Head of caudate nucleus (tissue), 42 donors: ENCODE measurements at regions of chr1 and their contacts with region 1.

Region 1: GRCh38 chr1:169106095-169106920 is at the start of gene ATP1B1:
- DNase-seq: peak; percentile 68 to 96 (median 91)

Region 2: GRCh38 chr1:168637350-168637991 is 468.8 kb before region 1 on chr1:
- intact Hi-C with region 1: loop called (anchors 5 kb)
- DNase-seq: peak in 1 of 42 donors; percentile 28

Region 3: DNA sequence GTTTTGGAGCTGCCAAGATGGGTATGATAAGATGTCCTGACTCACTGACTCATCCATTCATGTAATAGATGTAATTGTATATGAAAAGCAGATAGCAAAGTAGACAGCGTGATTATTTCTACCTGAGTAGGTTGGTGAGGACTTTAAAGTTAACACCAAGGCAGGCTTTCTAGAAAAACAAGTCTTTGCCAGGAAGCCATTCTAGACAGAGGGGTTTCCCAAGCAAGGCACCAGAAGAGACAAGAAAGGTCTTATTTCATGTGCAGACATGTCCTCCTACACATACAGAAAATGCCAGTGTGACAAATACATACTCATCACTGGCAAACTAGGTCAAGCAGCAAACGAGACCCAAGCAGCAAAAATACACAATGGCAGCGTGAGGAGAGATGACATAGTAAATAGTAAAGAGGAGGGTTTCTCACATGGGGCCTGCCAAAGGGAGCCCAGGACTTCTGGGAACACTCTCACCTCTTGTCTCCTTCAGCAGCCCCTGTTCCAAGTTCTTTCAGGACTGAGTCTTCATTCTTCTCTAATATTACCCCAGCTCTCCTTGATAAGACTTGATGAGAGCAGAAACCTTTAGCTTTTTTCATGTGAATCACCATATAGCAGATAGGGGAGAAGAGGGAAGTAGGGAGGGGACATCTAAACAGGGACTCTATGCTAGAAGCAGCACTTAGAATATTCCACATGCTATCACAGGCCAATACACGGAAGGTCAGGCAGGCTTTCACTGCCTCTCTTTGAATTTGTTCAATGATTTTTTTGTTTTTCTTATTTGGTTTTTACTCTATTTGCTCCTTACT is 114.4 kb before region 1 on chr1:
- intact Hi-C with region 1: loop called (anchors 10 kb)
- DNase-seq: no peak

Region 4: GRCh38 chr1:169072945-169073730 is 33.2 kb before region 1 on chr1:
- intact Hi-C with region 1: no loop called
- DNase-seq: peak in 2 of 42 donors; percentile 13 to 16

Region 5: DNA sequence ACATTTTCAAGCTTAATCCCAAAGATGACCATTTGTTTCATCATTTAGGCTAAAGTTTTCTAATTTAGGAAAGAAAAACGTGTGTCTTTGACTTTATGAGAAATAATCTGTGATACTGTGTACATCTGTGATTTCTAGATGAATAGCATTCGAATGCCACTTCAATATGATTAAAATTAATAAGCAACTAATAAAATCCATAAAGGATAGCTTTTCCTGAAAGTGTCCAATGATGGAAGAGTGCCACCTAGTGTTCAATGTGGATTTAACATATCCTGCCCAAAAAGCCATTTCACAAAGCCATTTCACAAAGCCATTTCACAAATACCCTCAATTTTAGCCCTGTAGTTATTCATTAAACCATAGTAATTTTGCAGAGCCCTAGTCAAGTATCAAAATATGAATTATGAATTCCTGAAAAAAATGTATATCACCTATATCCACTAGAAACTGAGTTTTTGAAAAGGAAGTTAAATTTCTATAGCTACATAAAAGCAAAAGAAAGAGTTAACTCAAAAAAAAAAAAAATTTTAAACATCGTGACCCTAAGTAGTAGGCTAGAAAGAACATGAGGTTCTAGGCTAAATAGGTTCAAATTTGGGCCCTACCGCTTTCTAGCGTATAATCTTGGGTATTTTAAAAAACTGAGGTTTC is 242.2 kb after region 1 on chr1:
- intact Hi-C with region 1: loop called (anchors 10 kb)
- DNase-seq: peak in 18 of 42 donors; percentile 8 to 71 (median 28)